ENCODE measurements at regions of chr11 and their contacts with region 1.

Region 1: GRCh38 chr11:107457558-107458271 is at the start of gene CWF19L2:
- DNase-seq: peak; percentile 94
- H3K4me3 Mint-ChIP-seq: peak within 1 kb of the TSS; percentile 95
- H3K27ac Mint-ChIP-seq: peak within 1 kb of the TSS; percentile 90
- H3K4me1 Mint-ChIP-seq: peaks cover 26% of the 10 kb centered on the region
- H3K27me3 Mint-ChIP-seq: no peaks in the 10 kb centered on the region
- total RNA-seq, gene CWF19L2: 16.9 to 17.9 TPM

Region 2: GRCh38 chr11:106076919-106077608 is 1380.7 kb before region 1 on chr11 and contains the start of gene KBTBD3:
- CTCF ChIA-PET with region 1: no interaction called
- intact Hi-C with region 1: loop called (anchors 1 kb)
- DNase-seq: peak; percentile 98
- H3K4me3 Mint-ChIP-seq: peak within 1 kb of the TSS; percentile 91
- H3K27ac Mint-ChIP-seq: peak within 1 kb of the TSS; percentile 93
- H3K4me1 Mint-ChIP-seq: peaks cover 47% of the 10 kb centered on the region
- H3K27me3 Mint-ChIP-seq: no peaks in the 10 kb centered on the region
- total RNA-seq, gene KBTBD3: 6.6 to 7.9 TPM

Region 3: DNA sequence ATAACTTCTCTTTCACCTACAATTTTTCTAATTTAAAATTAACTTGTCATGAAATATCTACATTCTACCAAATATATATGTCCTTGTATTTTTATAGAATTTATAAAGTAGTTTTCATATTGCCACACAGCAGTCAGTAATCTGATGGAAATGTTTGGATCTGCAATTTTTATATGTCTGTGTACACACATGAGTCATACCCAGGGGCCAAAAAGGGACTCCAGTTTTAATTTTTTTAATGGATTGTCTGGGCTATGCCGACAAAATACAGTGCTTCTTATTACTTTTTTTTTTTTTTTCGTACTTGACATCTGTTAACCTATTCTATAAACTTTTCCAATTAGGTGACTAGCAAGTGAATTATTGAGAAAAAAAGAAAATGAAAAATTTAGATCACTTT is 445.7 kb before region 1 on chr11:
- CTCF ChIA-PET with region 1: no interaction called
- intact Hi-C with region 1: no loop called
- DNase-seq: no peak
- H3K4me3 Mint-ChIP-seq: no peak overlapping the region
- H3K27ac Mint-ChIP-seq: no peak overlapping the region
- H3K4me1 Mint-ChIP-seq: peaks cover under 1% of the 10 kb centered on the region
- H3K27me3 Mint-ChIP-seq: peaks cover 15% of the 10 kb centered on the region

Region 4: DNA sequence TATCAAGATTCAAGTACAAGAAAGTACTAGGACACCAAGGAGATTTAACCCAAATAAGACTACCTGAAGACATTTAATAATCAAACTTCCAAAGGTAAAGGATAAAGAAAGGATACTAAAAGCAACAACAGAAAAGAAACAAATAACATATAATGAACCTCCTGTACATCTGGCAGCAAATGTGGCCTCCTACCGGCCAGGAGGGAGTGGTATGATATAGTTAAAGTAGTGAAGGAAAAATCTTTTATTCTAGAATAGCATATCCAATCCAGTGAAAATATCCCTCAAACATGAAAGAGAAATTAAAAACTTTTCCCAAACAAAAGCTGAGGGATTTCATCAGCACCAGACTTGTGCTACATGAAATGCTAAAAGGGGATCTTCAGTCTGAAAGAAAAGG is 334.7 kb before region 1 on chr11:
- CTCF ChIA-PET with region 1: no interaction called
- intact Hi-C with region 1: no loop called
- DNase-seq: no peak
- H3K4me3 Mint-ChIP-seq: no peak overlapping the region
- H3K27ac Mint-ChIP-seq: no peak overlapping the region
- H3K4me1 Mint-ChIP-seq: no peaks in the 10 kb centered on the region
- H3K27me3 Mint-ChIP-seq: no peaks in the 10 kb centered on the region

Region 5: DNA sequence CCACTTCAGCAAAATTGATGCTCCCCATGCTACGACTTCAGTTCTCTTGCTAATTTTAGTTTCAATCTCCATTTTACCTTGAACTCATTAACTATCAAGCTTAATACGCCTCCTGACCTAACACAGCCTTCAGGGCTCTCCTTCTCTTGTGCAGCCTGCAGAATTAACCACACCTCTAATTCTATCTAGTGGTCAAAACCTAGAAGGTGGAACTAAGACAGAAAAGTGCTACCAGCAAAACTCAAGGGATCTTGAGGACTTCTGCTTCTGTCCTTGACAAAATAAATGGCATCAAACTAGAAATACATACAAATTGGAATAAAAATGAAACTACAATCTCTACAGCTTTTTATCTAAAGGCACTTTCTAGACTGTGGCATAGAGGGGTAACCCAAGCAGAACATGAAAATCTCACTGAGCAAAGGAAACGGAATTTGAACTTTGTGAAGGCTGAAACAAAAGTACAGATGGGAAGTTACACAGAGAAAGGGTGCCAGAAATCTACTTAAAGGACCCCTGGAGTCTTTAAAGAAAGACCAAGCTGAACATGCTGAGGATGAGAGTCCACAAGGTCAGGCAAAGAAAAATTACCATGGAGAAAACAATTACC is 10.8 kb before region 1 on chr11:
- CTCF ChIA-PET with region 1: interaction called, 3 read pairs
- intact Hi-C with region 1: loop called (anchors 1 kb)
- DNase-seq: no peak
- H3K4me3 Mint-ChIP-seq: no peak overlapping the region
- H3K27ac Mint-ChIP-seq: no peak overlapping the region
- H3K4me1 Mint-ChIP-seq: peaks cover 20% of the 10 kb centered on the region
- H3K27me3 Mint-ChIP-seq: no peaks in the 10 kb centered on the region

Region 6: GRCh38 chr11:107590460-107591377 is 133.0 kb after region 1 on chr11 and contains the start of gene ELMOD1:
- CTCF ChIA-PET with region 1: no interaction called
- intact Hi-C with region 1: no loop called
- DNase-seq: peak; percentile 57
- H3K4me3 Mint-ChIP-seq: peak within 1 kb of the TSS; percentile 77
- H3K27ac Mint-ChIP-seq: no peak within 1 kb of the TSS
- H3K4me1 Mint-ChIP-seq: peaks cover 22% of the 10 kb centered on the region
- H3K27me3 Mint-ChIP-seq: peaks cover 71% of the 10 kb centered on the region
- total RNA-seq, gene ELMOD1: not detected

Region 7: GRCh38 chr11:107840129-107840484 is 382.4 kb after region 1 on chr11:
- CTCF ChIA-PET with region 1: no interaction called
- intact Hi-C with region 1: loop called (anchors 1 kb)
- DNase-seq: no peak
- H3K4me3 Mint-ChIP-seq: no peak overlapping the region
- H3K27ac Mint-ChIP-seq: peak overlapping the region; percentile 93
- H3K4me1 Mint-ChIP-seq: peaks cover 68% of the 10 kb centered on the region
- H3K27me3 Mint-ChIP-seq: no peaks in the 10 kb centered on the region

Region 8: GRCh38 chr11:108008656-108009496 is 551.2 kb after region 1 on chr11 and contains the start of gene CUL5:
- CTCF ChIA-PET with region 1: no interaction called
- intact Hi-C with region 1: loop called (anchors 1 kb)
- DNase-seq: peak; percentile 92
- H3K4me3 Mint-ChIP-seq: peak within 1 kb of the TSS; percentile 93
- H3K27ac Mint-ChIP-seq: peak within 1 kb of the TSS; percentile 76
- H3K4me1 Mint-ChIP-seq: peaks cover 15% of the 10 kb centered on the region
- H3K27me3 Mint-ChIP-seq: no peaks in the 10 kb centered on the region
- total RNA-seq, gene CUL5: 25.9 to 26.2 TPM

Region 9: GRCh38 chr11:108497317-108498045 is 1039.8 kb after region 1 on chr11:
- CTCF ChIA-PET with region 1: no interaction called
- intact Hi-C with region 1: loop called (anchors 10 kb)
- DNase-seq: peak; percentile 84
- H3K4me3 Mint-ChIP-seq: peak overlapping the region; percentile 85
- H3K27ac Mint-ChIP-seq: peak overlapping the region; percentile 92
- H3K4me1 Mint-ChIP-seq: peaks cover 16% of the 10 kb centered on the region
- H3K27me3 Mint-ChIP-seq: no peaks in the 10 kb centered on the region

Measured in activated naive CD4-positive, alpha-beta T cell treated with anti-CD3 and anti-CD28 coated beads for 36 hours (primary cell).